Esophagus squamous epithelium (tissue), 5 donors: ENCODE measurements at regions of chr17 and their contacts with region 1.

Region 1: GRCh38 chr17:2418572-2418971 is 17.7 kb upstream of the MNT start:
- DNase-seq: no peak
- H3K4me3 ChIP-seq: no peak overlapping the region
- H3K27ac ChIP-seq: peak overlapping the region; percentile 36 to 81 (median 59)
- H3K4me1 ChIP-seq: peaks cover 4 to 61% (median 6%) of the 10 kb centered on the region in 3 donors
- H3K27me3 ChIP-seq: no peaks in the 10 kb centered on the region
- CTCF ChIP-seq: no peak
- POLR2A ChIP-seq: no peak

Region 2: DNA sequence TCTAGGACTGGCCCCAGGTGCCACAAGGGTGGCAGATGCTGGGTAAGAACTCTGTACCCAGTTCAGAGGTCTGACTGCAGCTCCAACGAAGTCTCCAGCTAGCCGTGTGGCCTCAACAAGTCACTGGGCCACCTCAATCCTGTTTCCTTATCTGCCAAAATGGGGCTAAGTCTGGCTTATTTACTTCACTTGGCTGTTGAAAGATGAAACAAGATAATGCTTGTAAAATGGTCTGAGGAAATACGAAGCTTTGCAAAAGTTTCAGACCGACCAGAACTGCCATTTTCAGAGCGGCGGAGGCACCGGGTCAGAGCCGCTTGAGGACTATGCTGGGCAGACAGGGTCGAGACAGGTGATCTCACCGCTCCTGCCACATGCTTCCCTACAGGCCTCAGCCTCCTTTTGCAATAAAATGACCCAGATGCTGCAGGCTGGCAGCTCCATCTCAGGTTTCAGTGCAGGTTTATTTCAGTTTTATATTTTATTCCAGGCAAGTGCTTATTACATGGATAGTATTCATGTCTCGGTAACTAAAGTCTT is 34.9 kb before region 1 on chr17:
- intact Hi-C with region 1: loop called (anchors 2 kb)
- DNase-seq: no peak
- H3K4me3 ChIP-seq: no peak overlapping the region
- H3K27ac ChIP-seq: peak overlapping the region in 3 of 4 donors; percentile 46 to 69 (median 61)
- H3K4me1 ChIP-seq: peaks cover 11 to 57% (median 12%) of the 10 kb centered on the region in 3 donors
- H3K27me3 ChIP-seq: no peaks in the 10 kb centered on the region
- CTCF ChIP-seq: no peak
- POLR2A ChIP-seq: no peak